Cardiac septum (tissue), 1 donor: ENCODE measurements at regions of chr9 and their contacts with region 1.

Region 1: GRCh38 chr9:134544388-134545214 is 97.0 kb upstream of the COL5A1 start:
- DNase-seq: no peak

Region 2: GRCh38 chr9:134592018-134592818 is 47.6 kb after region 1 on chr9:
- intact Hi-C with region 1: loop called (anchors 5 kb)
- DNase-seq: no peak